Activated B cell treated with CpG ODN at 0.5 μM for 24 hours (primary cell): ENCODE measurements at regions of chr2 and their contacts with region 1.

Region 1: DNA sequence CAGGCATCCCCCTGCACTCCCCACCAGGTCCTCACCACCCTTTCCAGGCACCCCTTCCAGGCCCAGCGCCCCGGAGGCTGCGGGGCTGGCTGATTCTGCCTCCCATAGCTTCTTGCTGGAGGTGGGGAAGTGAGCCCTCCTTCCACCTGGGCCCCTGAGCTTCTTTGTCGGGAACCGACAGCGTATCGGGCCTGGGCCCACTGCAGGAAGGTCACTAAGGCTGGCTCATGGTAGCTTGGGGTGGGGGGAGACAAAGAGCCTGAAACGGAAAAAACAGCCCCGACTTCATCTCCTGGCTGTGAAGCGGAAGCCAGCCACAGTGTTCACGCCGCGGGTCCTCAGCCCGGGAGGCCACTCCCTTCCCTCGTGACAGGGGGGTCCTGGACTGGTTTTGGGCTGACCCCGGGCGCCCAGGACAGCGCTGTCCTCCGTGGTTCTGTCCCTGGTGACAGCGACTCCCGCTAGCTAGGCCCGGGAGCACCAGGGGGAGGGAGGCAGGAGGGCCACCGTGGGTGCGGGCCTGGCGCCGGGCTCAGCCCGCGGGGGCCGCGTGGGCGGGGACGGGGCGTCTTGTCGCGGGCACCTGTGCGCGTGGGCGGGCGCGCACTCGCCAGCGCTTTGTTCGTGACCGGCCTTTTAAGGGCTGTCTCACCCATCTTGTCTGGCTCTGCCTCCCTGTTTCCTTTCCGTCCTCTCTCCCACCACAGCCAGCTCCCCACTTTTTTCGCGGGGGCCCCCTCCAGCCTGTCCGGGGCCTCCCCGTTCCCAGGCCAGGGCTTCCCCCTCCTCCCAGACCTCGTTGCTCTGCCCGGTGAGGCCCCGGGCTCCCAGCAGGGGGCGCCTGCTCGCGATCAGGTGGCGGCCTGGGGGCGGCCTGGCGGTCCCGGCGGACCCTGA is 64.9 kb downstream of the DNMT3A start:
- DNase-seq: peak; percentile 70
- ATAC-seq: peak; percentile 13
- H3K4me3 Mint-ChIP-seq: peak overlapping the region; percentile 67
- H3K27ac Mint-ChIP-seq: peak overlapping the region; percentile 76
- H3K4me1 Mint-ChIP-seq: peaks cover 88% of the 10 kb centered on the region
- H3K27me3 Mint-ChIP-seq: no peaks in the 10 kb centered on the region
- CTCF ChIP-seq: no peak

Region 2: DNA sequence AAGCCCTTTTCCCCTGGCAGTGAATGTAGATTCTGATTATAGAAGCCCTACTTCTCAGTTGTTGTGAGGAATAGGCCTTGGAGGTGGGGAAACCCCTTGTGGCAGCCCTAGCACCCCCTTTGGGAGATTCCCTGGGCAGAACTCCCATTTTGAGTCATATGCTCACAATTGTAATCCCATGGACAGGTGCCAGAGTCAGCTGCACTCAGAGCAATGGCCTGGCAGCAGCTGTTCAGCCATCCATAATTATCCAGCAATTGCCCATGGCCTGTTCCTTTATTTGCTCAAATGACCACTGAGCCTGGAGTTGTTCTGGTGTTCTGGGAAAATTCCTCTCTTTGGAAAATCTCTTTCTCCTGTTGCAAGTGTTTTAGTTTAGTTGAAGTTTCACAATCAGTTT is 555.3 kb before region 1 on chr2:
- CTCF ChIA-PET with region 1: no interaction called
- POLR2A ChIA-PET with region 1: no interaction called
- intact Hi-C with region 1: loop called (anchors 5 kb)
- DNase-seq: no peak
- ATAC-seq: no peak
- H3K4me3 Mint-ChIP-seq: no peak overlapping the region
- H3K27ac Mint-ChIP-seq: no peak overlapping the region
- H3K4me1 Mint-ChIP-seq: peaks cover 29% of the 10 kb centered on the region
- H3K27me3 Mint-ChIP-seq: no peaks in the 10 kb centered on the region
- CTCF ChIP-seq: no peak

Region 3: GRCh38 chr2:25252281-25253105 is 24.3 kb before region 1 on chr2:
- CTCF ChIA-PET with region 1: interaction called, 4 read pairs
- POLR2A ChIA-PET with region 1: interaction called, 9 read pairs
- intact Hi-C with region 1: loop called (anchors 2 kb)
- DNase-seq: peak; percentile 46
- ATAC-seq: peak; percentile 65
- H3K4me3 Mint-ChIP-seq: peak overlapping the region; percentile 78
- H3K27ac Mint-ChIP-seq: no peak overlapping the region
- H3K4me1 Mint-ChIP-seq: peaks cover 29% of the 10 kb centered on the region
- H3K27me3 Mint-ChIP-seq: no peaks in the 10 kb centered on the region
- CTCF ChIP-seq: no peak

Region 4: GRCh38 chr2:25342372-25343186 is 65.8 kb after region 1 on chr2:
- CTCF ChIA-PET with region 1: no interaction called
- POLR2A ChIA-PET with region 1: interaction called, 4 read pairs
- intact Hi-C with region 1: loop called (anchors 1 kb)
- DNase-seq: peak; percentile 82
- ATAC-seq: peak; percentile 92
- H3K4me3 Mint-ChIP-seq: peak overlapping the region; percentile 84
- H3K27ac Mint-ChIP-seq: peak overlapping the region; percentile 59
- H3K4me1 Mint-ChIP-seq: peaks cover 19% of the 10 kb centered on the region
- H3K27me3 Mint-ChIP-seq: peaks cover 1% of the 10 kb centered on the region
- CTCF ChIP-seq: peak; percentile 74

Region 5: DNA sequence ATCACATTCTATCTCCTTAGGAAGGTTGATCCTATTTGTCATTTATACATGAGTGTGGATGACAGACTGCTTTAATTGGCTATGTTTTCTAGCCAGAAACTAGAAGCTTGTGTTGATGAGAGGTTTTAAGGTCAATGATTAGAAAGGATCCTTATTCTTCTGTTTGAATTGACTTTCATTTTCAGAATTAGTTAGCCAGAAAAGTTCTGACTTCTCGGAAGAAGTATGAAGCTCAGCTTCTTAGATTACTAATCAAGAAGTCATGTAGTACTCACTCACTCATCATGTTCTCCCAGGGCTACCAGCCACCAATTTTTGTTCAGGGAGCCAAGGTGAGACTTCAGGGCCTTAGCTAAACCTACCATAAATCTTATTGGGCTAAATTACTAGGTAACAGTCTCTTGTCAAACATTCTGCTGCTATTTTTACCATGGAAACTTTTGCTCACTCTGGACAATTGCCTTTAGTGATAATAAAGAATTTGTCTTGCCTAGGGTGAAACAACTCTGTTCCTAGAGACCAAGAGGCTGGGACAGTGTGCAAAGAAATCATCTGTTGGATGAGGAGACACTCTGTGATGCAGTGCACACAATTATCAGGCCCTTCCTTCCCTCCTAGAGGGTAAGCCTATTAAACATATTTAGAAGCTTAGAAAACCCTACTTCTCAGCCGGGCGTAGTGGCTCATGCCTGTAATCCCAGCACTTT is 176.5 kb after region 1 on chr2:
- CTCF ChIA-PET with region 1: no interaction called
- POLR2A ChIA-PET with region 1: no interaction called
- intact Hi-C with region 1: no loop called
- DNase-seq: no peak
- ATAC-seq: peak; percentile 85
- H3K4me3 Mint-ChIP-seq: peak overlapping the region; percentile 44
- H3K27ac Mint-ChIP-seq: peak overlapping the region; percentile 82
- H3K4me1 Mint-ChIP-seq: peaks cover 39% of the 10 kb centered on the region
- H3K27me3 Mint-ChIP-seq: no peaks in the 10 kb centered on the region
- CTCF ChIP-seq: no peak

Region 6: GRCh38 chr2:25521665-25522387 is 245.0 kb after region 1 on chr2:
- CTCF ChIA-PET with region 1: interaction called, 3 read pairs
- POLR2A ChIA-PET with region 1: no interaction called
- intact Hi-C with region 1: loop called (anchors 1 kb)
- DNase-seq: no peak
- ATAC-seq: peak; percentile 97
- H3K4me3 Mint-ChIP-seq: peak overlapping the region; percentile 7
- H3K27ac Mint-ChIP-seq: peak overlapping the region; percentile 38
- H3K4me1 Mint-ChIP-seq: peaks cover 23% of the 10 kb centered on the region
- H3K27me3 Mint-ChIP-seq: no peaks in the 10 kb centered on the region
- CTCF ChIP-seq: no peak